ENCODE measurements at regions of chr11 and their contacts with region 1.

Region 1: DNA sequence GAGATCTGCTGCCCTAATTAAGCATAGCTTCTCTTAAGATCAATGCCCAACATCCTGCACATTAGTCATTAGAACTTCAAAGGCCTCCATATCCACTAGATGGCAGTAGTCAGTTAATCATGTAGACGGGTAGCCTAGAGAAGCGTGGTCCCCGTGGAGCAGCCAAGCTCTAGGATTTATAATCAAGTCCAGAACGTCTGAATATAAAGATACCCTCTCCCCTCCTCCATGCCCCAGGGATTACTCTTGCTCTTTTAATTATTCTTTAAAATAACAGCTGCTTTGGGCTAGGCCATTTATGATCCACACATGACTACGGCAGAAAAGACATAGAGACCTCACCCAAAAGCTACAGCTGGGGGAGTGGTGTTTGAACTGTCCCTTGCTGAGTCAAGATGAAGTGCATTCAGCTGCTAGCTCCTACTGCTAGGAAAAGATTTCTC is 327.6 kb upstream of the PLET1 start:
- DNase-seq: peak; percentile 57 to 76 (median 66)
- ATAC-seq: peak; percentile 58 to 88 (median 82)
- H3K4me3 ChIP-seq: no peak overlapping the region
- H3K27ac ChIP-seq: peak overlapping the region in 1 of 12 donors; percentile 44
- H3K4me1 ChIP-seq: peaks cover 0 to 6% (median 1%) of the 10 kb centered on the region in 12 donors
- H3K27me3 ChIP-seq: no peaks in the 10 kb centered on the region
- CTCF ChIP-seq: peak; percentile 64 to 86 (median 74)
- POLR2A ChIP-seq: no peak

Region 2: DNA sequence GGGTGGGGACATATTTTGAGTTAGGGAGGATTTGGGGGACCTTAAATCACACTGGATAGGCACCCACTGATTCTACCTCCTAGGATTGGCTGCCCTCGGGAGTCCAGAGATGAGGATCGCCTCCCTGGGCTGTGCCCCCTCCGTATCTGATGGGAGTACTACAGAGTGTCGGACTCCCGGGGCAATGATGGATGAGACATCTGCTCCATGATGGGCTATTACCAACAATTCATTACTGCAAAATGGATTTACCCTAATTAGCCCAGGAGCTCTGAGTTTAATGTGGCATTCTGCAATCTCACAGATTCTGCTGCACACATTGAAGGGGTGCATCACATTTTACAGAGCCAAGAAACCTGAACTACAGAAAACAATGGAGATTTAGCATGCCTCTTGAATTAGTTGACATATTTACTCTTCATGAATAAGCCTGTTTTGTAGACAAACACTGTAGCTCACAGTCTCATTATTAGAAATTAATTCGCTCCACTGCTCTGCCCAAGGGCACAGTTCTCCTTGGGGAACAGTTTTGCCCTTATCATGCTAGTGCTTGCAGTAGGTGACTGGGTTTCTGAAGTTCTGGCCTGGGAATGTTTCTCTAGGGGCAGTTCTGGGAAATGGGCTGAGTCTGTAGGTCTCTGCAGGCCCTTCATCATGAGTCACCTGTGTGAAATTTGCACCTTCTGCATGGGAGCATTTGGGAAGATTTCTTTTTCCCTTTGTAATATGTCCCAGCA is 110.5 kb before region 1 on chr11:
- intact Hi-C with region 1: no loop called
- DNase-seq: no peak
- ATAC-seq: no peak
- H3K4me3 ChIP-seq: no peak overlapping the region
- H3K27ac ChIP-seq: no peak overlapping the region
- H3K4me1 ChIP-seq: no peaks in the 10 kb centered on the region
- H3K27me3 ChIP-seq: peaks cover 0 to 3% (median 0%) of the 10 kb centered on the region in 9 donors
- CTCF ChIP-seq: no peak
- POLR2A ChIP-seq: no peak

Region 3: GRCh38 chr11:112514011-112514740 is 74.1 kb before region 1 on chr11:
- intact Hi-C with region 1: no loop called
- DNase-seq: no peak
- ATAC-seq: no peak
- H3K4me3 ChIP-seq: no peak overlapping the region
- H3K27ac ChIP-seq: no peak overlapping the region
- H3K4me1 ChIP-seq: no peaks in the 10 kb centered on the region
- H3K27me3 ChIP-seq: peaks cover 0 to 2% (median 0%) of the 10 kb centered on the region in 9 donors
- CTCF ChIP-seq: no peak
- POLR2A ChIP-seq: no peak

Region 4: GRCh38 chr11:112644410-112645131 is 56.3 kb after region 1 on chr11:
- intact Hi-C with region 1: loop called in 1 of 10 experiments (anchors 10 kb)
- DNase-seq: no peak
- ATAC-seq: no peak
- H3K4me3 ChIP-seq: no peak overlapping the region
- H3K27ac ChIP-seq: no peak overlapping the region
- H3K4me1 ChIP-seq: peaks cover 0 to 1% (median 0%) of the 10 kb centered on the region in 12 donors
- H3K27me3 ChIP-seq: no peaks in the 10 kb centered on the region
- CTCF ChIP-seq: no peak
- POLR2A ChIP-seq: no peak

Region 5: GRCh38 chr11:112784323-112785073 is 196.2 kb after region 1 on chr11:
- intact Hi-C with region 1: loop called in 2 of 10 experiments (anchors 10 kb)
- DNase-seq: peak; percentile 68 to 91 (median 85)
- ATAC-seq: peak; percentile 63 to 83 (median 73)
- H3K4me3 ChIP-seq: peak overlapping the region in 9 of 12 donors; percentile 1 to 40 (median 27)
- H3K27ac ChIP-seq: peak overlapping the region; percentile 7 to 75 (median 56)
- H3K4me1 ChIP-seq: peaks cover 0 to 56% (median 34%) of the 10 kb centered on the region in 12 donors
- H3K27me3 ChIP-seq: no peaks in the 10 kb centered on the region
- CTCF ChIP-seq: peak in 2 of 12 donors; percentile 12 to 15
- POLR2A ChIP-seq: no peak

Region 6: GRCh38 chr11:113113801-113114706 is 525.8 kb after region 1 on chr11:
- intact Hi-C with region 1: loop called in 7 of 10 experiments (anchors 5 to 10 kb)
- DNase-seq: peak; percentile 49 to 67 (median 64)
- ATAC-seq: peak; percentile 89 to 94 (median 91)
- H3K4me3 ChIP-seq: no peak overlapping the region
- H3K27ac ChIP-seq: peak overlapping the region in 9 of 12 donors; percentile 41 to 79 (median 62)
- H3K4me1 ChIP-seq: peaks cover 0 to 58% (median 21%) of the 10 kb centered on the region in 12 donors
- H3K27me3 ChIP-seq: no peaks in the 10 kb centered on the region
- CTCF ChIP-seq: peak; percentile 32 to 77 (median 65)
- POLR2A ChIP-seq: no peak

Region 7: GRCh38 chr11:113289431-113290187 is 701.3 kb after region 1 on chr11:
- intact Hi-C with region 1: loop called (anchors 1 to 5 kb)
- DNase-seq: peak; percentile 42 to 77 (median 54)
- ATAC-seq: peak; percentile 73 to 79 (median 77)
- H3K4me3 ChIP-seq: no peak overlapping the region
- H3K27ac ChIP-seq: no peak overlapping the region
- H3K4me1 ChIP-seq: peaks cover 0 to 9% (median 0%) of the 10 kb centered on the region in 12 donors
- H3K27me3 ChIP-seq: peaks cover 0 to 8% (median 0%) of the 10 kb centered on the region in 9 donors
- CTCF ChIP-seq: peak; percentile 79 to 93 (median 88)
- POLR2A ChIP-seq: no peak